ENCODE measurements at regions of chr2 and their contacts with region 1.

Region 1: DNA sequence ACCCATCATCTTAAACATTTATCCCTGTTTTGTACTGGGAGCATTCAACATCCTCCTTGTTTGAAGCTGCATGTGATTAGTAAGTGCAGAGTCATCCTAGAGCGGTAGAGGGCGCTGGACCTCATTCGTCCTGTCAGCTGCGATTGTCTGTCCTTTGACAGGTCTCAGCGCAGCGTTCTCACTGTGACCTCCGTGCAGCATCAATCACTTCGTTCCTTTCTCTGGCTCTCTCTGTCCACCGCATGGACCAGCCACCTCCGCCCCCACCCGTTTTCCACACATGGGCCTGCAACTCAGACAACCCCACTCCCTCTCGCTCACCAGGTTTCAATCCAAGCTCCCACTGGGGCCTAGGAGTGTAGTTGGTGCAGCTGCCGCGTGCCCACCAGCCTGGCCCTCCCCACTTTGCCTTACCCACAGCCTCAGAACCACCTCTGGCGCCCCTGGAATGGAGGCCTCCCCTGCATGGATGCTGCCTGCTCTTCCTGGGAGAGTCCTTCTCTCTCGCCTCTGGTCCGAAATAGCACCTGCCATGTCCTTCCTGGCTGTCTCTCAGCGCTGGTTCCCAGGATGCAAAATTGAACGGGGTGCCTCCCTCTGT is 90.5 kb downstream of the NDUFA10 start:
- DNase-seq: peak; percentile 39 to 80
- ATAC-seq: peak; percentile 81 to 91 (median 85)
- H3K4me3 ChIP-seq: no peak overlapping the region
- H3K4me3 Mint-ChIP-seq: no peak overlapping the region
- H3K27ac ChIP-seq: no peak overlapping the region
- H3K27ac Mint-ChIP-seq: no peak overlapping the region
- H3K4me1 ChIP-seq: peaks cover 4% of the 10 kb centered on the region
- H3K4me1 Mint-ChIP-seq: peaks cover 5 to 9% of the 10 kb centered on the region in 2 donors
- H3K27me3 ChIP-seq: no peaks in the 10 kb centered on the region
- H3K27me3 Mint-ChIP-seq: peaks cover 4 to 7% of the 10 kb centered on the region in 2 donors
- CTCF ChIP-seq: peak; percentile 83

Region 2: DNA sequence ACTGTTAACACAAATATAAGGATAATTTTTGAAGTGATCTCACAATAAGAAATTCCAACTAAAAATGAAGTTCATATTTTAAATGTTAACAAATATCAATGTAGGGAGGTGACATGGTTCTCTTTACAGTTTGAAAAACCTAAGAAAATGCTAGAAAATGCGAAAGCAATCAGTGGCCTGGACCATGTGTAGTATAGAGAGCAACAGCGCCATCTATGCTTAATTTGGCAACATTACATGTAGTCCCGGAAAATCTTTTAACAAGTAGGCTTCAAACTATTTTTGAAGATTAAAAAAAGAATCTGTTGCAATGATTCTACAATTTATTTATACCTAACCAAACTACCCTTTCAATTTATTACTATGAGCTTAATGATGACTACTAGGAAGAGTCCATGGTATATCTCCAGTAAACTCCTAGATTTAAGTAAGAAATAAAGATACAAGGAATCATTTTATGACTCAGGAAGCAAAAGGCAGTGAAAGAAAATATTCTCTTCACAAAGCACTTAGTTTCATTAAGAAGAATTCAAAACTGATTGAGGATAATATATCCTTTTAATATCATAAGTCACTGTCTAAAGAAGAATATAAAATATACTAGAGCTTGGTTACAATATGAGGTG is 57.1 kb after region 1 on chr2:
- intact Hi-C with region 1: loop called (anchors 1 kb)
- DNase-seq: peak in 1 of 2 donors; percentile 71
- ATAC-seq: peak; percentile 60 to 76 (median 74)
- H3K4me3 ChIP-seq: no peak overlapping the region
- H3K4me3 Mint-ChIP-seq: no peak overlapping the region
- H3K27ac ChIP-seq: no peak overlapping the region
- H3K27ac Mint-ChIP-seq: no peak overlapping the region
- H3K4me1 ChIP-seq: no peaks in the 10 kb centered on the region
- H3K4me1 Mint-ChIP-seq: peaks cover 7 to 8% of the 10 kb centered on the region in 2 donors
- H3K27me3 ChIP-seq: no peaks in the 10 kb centered on the region
- H3K27me3 Mint-ChIP-seq: no peaks in the 10 kb centered on the region
- CTCF ChIP-seq: peak; percentile 98

Region 3: GRCh38 chr2:240143801-240144648 is 209.4 kb after region 1 on chr2:
- intact Hi-C with region 1: loop called (anchors 2 kb)
- DNase-seq: peak; percentile 81 to 88
- ATAC-seq: peak; percentile 86 to 99 (median 98)
- H3K4me3 ChIP-seq: no peak overlapping the region
- H3K4me3 Mint-ChIP-seq: no peak overlapping the region
- H3K27ac ChIP-seq: no peak overlapping the region
- H3K27ac Mint-ChIP-seq: no peak overlapping the region
- H3K4me1 ChIP-seq: peaks cover 2% of the 10 kb centered on the region
- H3K4me1 Mint-ChIP-seq: peaks cover 0 to 8% of the 10 kb centered on the region in 2 donors
- H3K27me3 ChIP-seq: no peaks in the 10 kb centered on the region
- H3K27me3 Mint-ChIP-seq: no peaks in the 10 kb centered on the region
- CTCF ChIP-seq: peak; percentile 90